ENCODE measurements at regions of chr3 and their contacts with region 1.

Region 1: DNA sequence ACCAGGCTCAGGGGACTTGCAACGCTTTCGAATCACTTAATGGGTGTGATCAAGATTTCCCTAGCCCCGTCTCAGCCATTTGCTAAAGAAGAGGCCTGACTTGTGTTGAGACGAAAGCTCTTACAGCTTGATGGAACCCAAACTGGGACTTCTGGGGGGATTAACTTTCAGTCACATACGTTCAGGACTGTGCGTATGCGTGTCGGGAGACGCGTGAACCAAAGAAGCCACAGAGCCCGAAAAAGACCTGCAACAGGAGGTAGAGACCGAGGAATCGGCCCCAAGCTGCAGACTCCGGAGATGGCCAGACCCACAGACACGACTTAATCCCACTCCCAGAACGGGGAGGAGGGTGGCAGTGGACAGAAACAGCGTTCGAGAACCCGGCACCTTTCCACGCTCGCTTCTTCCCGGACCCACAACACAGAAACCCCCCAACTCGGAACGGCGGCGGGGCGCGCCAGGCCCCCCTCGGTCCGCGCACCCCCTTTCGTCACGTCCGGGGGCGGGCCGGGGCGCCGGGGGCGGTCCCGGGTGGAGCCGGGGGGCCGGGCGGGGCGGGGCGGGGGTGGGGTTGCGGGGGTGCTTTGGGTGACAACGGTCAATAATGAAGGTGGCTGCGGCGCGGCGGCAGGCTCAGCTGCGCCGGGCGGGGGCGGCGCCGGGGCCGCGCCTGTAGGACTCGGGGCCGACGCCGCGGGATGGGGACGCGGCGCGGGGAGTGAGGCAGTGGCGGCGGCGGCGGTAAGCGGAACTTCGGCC is at the start of gene ATP11B:
- DNase-seq: peak; percentile 84
- ATAC-seq: peak; percentile 75
- H3K4me3 Mint-ChIP-seq: peak within 1 kb of the TSS; percentile 99
- H3K27ac Mint-ChIP-seq: peak within 1 kb of the TSS; percentile 99
- H3K4me1 Mint-ChIP-seq: peaks cover 37% of the 10 kb centered on the region
- H3K27me3 Mint-ChIP-seq: no peaks in the 10 kb centered on the region
- CTCF ChIP-seq: no peak
- total RNA-seq, gene ATP11B: 87.4 and 93.3 TPM in 2 replicates

Region 2: DNA sequence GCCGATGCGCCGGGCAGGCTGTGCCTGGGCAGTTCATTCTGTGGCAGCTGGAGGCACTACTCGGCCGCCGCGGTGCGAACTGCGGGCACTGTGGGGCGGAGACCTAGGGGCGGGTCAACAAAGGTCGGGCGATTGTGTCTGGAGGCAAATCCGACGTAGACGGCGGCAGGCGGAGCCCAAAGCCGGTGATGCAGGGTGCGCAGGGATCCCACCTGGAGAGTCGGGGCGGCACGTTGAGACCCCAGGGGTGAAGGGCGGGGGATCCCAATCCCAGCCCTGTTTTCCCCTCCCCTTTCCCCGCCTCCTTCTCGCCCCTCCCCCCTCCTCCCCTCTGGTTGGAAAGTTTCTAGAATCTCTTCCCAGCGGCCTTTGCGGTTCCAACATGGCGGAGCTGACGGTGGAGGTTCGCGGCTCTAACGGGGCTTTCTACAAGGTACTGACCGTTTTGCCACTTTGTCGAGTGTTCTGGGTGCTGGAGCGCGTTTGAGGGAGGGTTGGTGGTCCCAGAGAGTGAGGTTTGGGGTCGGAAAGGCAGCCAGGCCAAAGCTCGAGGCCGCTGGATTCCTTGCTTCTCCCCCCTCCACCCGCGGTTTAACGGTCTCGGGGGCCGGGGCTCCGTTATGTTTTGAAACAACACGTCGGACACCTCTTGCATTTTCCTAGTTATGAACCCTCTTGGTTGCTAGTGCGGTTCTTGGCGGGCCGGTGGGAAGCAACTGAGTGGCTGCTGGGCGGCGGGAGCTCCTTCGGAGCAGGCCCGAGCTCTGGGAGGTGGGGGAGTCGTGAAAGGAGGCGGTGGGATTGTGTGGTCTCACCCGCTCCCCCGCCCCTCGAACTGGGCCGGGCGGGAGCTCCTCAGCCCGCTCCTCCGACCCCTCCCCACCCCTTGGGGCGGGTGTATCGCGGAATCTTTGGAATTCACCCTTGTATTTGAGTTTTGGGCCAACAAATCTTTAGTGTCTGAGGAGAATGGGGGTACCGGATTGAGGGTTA is 1880.5 kb before region 1 on chr3 and contains the start of gene FXR1:
- CTCF ChIA-PET with region 1: no interaction called
- POLR2A ChIA-PET with region 1: interaction called, 6 read pairs
- intact Hi-C with region 1: loop called (anchors 5 kb)
- DNase-seq: peak; percentile 90
- ATAC-seq: peak; percentile 95
- H3K4me3 Mint-ChIP-seq: peak within 1 kb of the TSS; percentile 94
- H3K27ac Mint-ChIP-seq: peak within 1 kb of the TSS; percentile 95
- H3K4me1 Mint-ChIP-seq: peaks cover 52% of the 10 kb centered on the region
- H3K27me3 Mint-ChIP-seq: no peaks in the 10 kb centered on the region
- CTCF ChIP-seq: no peak
- total RNA-seq, gene FXR1: 130 TPM in 2 replicates

Region 3: GRCh38 chr3:182729903-182730674 is 63.0 kb before region 1 on chr3:
- CTCF ChIA-PET with region 1: interaction called, 3 read pairs
- POLR2A ChIA-PET with region 1: interaction called, 13 read pairs
- intact Hi-C with region 1: loop called (anchors 1 kb)
- DNase-seq: no peak
- ATAC-seq: peak; percentile 72
- H3K4me3 Mint-ChIP-seq: peak overlapping the region; percentile 83
- H3K27ac Mint-ChIP-seq: peak overlapping the region; percentile 72
- H3K4me1 Mint-ChIP-seq: peaks cover 40% of the 10 kb centered on the region
- H3K27me3 Mint-ChIP-seq: no peaks in the 10 kb centered on the region
- CTCF ChIP-seq: no peak

Region 4: GRCh38 chr3:182837855-182838454 is 44.9 kb after region 1 on chr3:
- CTCF ChIA-PET with region 1: no interaction called
- POLR2A ChIA-PET with region 1: interaction called, 8 read pairs
- intact Hi-C with region 1: loop called (anchors 2 kb)
- DNase-seq: no peak
- ATAC-seq: no peak
- H3K4me3 Mint-ChIP-seq: no peak overlapping the region
- H3K27ac Mint-ChIP-seq: no peak overlapping the region
- H3K4me1 Mint-ChIP-seq: no peaks in the 10 kb centered on the region
- H3K27me3 Mint-ChIP-seq: no peaks in the 10 kb centered on the region
- CTCF ChIP-seq: no peak

Region 5: GRCh38 chr3:183099026-183099837 is 306.1 kb after region 1 on chr3 and contains the start of gene MCCC1:
- CTCF ChIA-PET with region 1: no interaction called
- POLR2A ChIA-PET with region 1: no interaction called
- intact Hi-C with region 1: loop called (anchors 5 kb)
- DNase-seq: peak; percentile 91
- ATAC-seq: peak; percentile 96
- H3K4me3 Mint-ChIP-seq: peak within 1 kb of the TSS; percentile 97
- H3K27ac Mint-ChIP-seq: peak within 1 kb of the TSS; percentile 91
- H3K4me1 Mint-ChIP-seq: peaks cover 34% of the 10 kb centered on the region
- H3K27me3 Mint-ChIP-seq: no peaks in the 10 kb centered on the region
- CTCF ChIP-seq: no peak
- total RNA-seq, gene MCCC1: 25.2 and 31.6 TPM in 2 replicates